ENCODE measurements at regions of chr4 and their contacts with region 1.

Region 1: GRCh38 chr4:145618932-145619638 is at the start of gene MMAA:
- DNase-seq: peak; percentile 96 to 97
- ATAC-seq: peak; percentile 99 to 100 (median 100)
- H3K4me3 ChIP-seq: peak within 1 kb of the TSS; percentile 63 to 92 (median 78)
- H3K27ac ChIP-seq: peak within 1 kb of the TSS; percentile 85 to 99 (median 96)
- H3K4me1 ChIP-seq: peaks cover 0 to 39% (median 16%) of the 10 kb centered on the region in 9 donors
- H3K27me3 ChIP-seq: no peaks in the 10 kb centered on the region
- CTCF ChIP-seq: peak; percentile 48 to 81 (median 75)
- total RNA-seq, gene MMAA: 6.6 to 13.5 (median 9.8) TPM

Region 2: GRCh38 chr4:145154573-145154972 is 464.5 kb before region 1 on chr4:
- intact Hi-C with region 1: loop called in 6 of 10 experiments (anchors 2 to 10 kb)
- DNase-seq: peak in 1 of 2 donors; percentile 23
- ATAC-seq: peak in 7 of 8 donors; percentile 67 to 89 (median 86)
- H3K4me3 ChIP-seq: no peak overlapping the region
- H3K27ac ChIP-seq: peak overlapping the region in 6 of 10 donors; percentile 61 to 76 (median 64)
- H3K4me1 ChIP-seq: peaks cover 0 to 35% (median 11%) of the 10 kb centered on the region in 9 donors
- H3K27me3 ChIP-seq: no peaks in the 10 kb centered on the region
- CTCF ChIP-seq: peak; percentile 32 to 68 (median 54)

Region 3: GRCh38 chr4:145216535-145216934 is 402.6 kb before region 1 on chr4:
- intact Hi-C with region 1: loop called in 5 of 10 experiments (anchors 5 kb)
- DNase-seq: no peak
- ATAC-seq: peak in 1 of 8 donors; percentile 38
- H3K4me3 ChIP-seq: no peak overlapping the region
- H3K27ac ChIP-seq: no peak overlapping the region
- H3K4me1 ChIP-seq: peaks cover 0 to 18% (median 5%) of the 10 kb centered on the region in 9 donors
- H3K27me3 ChIP-seq: no peaks in the 10 kb centered on the region
- CTCF ChIP-seq: peak in 8 of 9 donors; percentile 29 to 67 (median 56)

Region 4: DNA sequence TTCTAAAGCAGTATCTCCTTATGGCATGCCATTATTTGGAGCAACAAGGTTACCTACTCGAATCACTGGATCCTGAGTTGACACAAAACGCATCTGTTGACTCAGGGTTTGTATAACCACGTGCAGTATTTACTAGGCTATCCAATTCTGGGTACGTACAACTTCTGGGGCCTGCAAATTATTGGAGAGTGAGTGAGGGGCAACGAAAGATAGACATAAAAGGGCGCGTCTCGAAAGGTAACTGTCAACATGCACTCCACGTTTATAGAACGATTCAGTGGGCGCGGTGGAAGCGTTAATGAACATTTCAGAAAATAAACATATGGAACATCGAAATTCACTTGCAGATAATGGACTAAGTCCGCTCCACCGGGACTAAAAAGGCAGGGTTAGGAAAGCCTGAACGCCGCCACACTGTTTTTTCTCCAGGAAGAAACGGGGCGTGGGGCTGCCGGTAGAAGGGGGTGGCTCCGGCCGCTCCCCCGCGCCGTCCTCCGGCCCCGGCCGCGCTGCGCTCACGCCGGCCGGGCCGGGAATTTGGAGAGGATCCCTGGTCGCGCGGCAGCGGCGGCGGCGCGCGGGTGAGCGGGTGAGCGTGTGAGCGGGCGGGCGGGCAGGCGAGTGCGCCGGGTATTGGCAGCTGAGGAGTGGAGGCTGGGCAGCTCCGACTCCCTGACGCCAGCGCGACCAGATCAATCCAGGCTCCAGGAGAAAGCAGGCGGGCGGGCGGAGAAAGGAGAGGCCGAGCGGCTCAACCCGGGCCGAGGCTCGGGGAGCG is 137.7 kb before region 1 on chr4 and contains the start of gene SMAD1:
- intact Hi-C with region 1: loop called in 4 of 10 experiments (anchors 5 to 10 kb)
- DNase-seq: peak; percentile 86 to 89
- ATAC-seq: peak; percentile 92 to 97 (median 94)
- H3K4me3 ChIP-seq: peak within 1 kb of the TSS; percentile 67 to 96 (median 88)
- H3K27ac ChIP-seq: peak within 1 kb of the TSS; percentile 94 to 99 (median 98)
- H3K4me1 ChIP-seq: peaks cover 0 to 41% (median 28%) of the 10 kb centered on the region in 9 donors
- H3K27me3 ChIP-seq: no peaks in the 10 kb centered on the region
- CTCF ChIP-seq: no peak
- total RNA-seq, gene SMAD1: 9.4 to 19.4 (median 16.2) TPM

Region 5: GRCh38 chr4:145732895-145733880 is 114.1 kb after region 1 on chr4:
- intact Hi-C with region 1: loop called in 7 of 10 experiments (anchors 2 to 10 kb)
- DNase-seq: peak; percentile 96 to 97
- ATAC-seq: peak; percentile 92 to 97 (median 95)
- H3K4me3 ChIP-seq: peak overlapping the region; percentile 11 to 78 (median 66)
- H3K27ac ChIP-seq: peak overlapping the region; percentile 93 to 100 (median 98)
- H3K4me1 ChIP-seq: peaks cover 12 to 64% (median 42%) of the 10 kb centered on the region in 9 donors
- H3K27me3 ChIP-seq: no peaks in the 10 kb centered on the region
- CTCF ChIP-seq: peak in 1 of 9 donors; percentile 23

Region 6: GRCh38 chr4:145829629-145830395 is 210.7 kb after region 1 on chr4:
- intact Hi-C with region 1: loop called in 1 of 10 experiments (anchors 10 kb)
- DNase-seq: no peak
- ATAC-seq: peak in 1 of 8 donors; percentile 19
- H3K4me3 ChIP-seq: no peak overlapping the region
- H3K27ac ChIP-seq: peak overlapping the region in 4 of 10 donors; percentile 4 to 28 (median 16)
- H3K4me1 ChIP-seq: peaks cover 0 to 17% (median 6%) of the 10 kb centered on the region in 9 donors
- H3K27me3 ChIP-seq: no peaks in the 10 kb centered on the region
- CTCF ChIP-seq: no peak

Region 7: DNA sequence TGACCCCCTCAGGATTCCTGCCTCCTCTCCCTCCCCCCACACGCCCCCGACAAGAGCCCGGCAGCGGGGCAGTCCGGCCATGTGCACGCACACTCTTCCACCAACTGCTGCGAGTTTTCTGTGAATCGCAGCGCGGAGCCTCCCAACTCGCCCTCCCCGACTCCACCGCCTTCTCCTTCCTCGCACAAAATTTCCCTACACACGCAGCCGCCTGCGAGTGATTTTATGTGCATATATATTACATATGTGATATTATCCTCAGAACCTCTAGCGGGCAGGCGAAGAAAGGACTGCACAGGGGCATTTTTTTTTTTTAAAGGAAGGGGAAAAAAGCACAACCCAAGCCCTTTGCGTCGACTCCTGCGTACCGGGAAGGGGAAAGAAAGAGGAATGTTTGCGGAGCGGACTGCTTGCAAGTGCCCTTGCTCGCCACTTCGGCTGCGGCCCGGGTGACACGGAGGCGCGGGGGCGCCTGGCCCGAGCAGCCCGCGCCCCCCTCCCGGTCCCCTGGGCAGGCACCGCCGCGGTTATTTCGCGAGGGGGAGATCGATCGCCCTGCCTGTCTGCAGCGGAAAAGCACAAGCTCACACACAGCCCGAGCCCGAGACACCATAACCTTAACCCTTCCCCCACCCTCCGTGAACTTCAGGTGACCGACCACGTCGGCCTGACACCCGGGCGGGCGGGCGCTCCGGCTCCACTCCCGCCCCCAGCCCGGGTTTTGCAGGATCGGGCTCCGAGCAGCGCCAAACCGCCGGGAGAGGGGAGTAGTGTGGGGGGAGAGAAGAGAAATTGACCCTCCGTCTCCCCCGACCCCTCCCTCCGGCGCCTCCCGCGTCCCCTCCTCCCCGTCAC is 317.3 kb after region 1 on chr4:
- intact Hi-C with region 1: loop called in 1 of 10 experiments (anchors 10 kb)
- DNase-seq: peak; percentile 70 to 76
- ATAC-seq: peak; percentile 65 to 87 (median 73)
- H3K4me3 ChIP-seq: peak overlapping the region; percentile 68 to 88 (median 82)
- H3K27ac ChIP-seq: peak overlapping the region; percentile 84 to 98 (median 96)
- H3K4me1 ChIP-seq: peaks cover 0 to 31% (median 12%) of the 10 kb centered on the region in 9 donors
- H3K27me3 ChIP-seq: peaks cover 0 to 17% (median 0%) of the 10 kb centered on the region in 7 donors
- CTCF ChIP-seq: peak in 4 of 9 donors; percentile 19 to 35 (median 26)

Measured in heart right ventricle (tissue), 16 donors.